Right lobe of liver (tissue), 6 donors: ENCODE measurements at regions of chr15 and their contacts with region 1.

Region 1: DNA sequence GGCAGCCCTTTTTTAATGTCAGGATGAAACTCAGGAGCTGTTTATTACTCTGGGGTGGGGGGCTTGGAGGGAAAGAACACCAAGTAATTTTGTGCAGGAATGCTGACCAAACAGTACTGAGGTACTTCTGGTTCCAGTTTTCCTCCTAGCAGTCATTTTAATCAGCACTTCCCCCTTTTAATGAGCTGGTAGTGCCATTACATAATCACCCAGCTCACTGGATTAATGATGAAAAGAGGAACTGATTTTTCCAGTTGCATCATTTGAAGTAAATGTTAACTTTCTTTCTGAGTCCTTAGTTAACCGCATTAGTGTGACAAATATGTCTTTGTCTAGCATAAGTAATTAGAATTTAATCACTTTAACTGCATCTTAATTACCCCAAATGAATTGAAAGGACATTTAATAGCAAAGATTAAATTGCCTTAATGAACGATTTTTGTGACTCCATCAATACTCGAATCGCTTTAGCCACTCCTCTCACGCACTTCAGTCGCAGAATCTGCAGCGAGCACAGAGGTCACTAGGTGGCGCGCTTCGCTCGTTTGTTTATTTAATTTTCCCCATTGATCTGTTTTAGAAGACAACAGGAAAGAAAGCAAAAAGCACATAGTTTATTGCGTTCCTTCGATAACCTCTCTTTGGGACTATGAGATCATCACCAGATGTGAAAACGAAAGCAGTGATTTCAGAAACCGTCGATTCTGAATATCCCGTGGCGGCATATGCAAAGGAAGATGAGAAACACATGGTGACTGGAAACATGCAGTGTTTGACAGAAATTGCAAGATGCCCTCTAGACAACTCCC is 9.8 kb downstream of the ONECUT1 start:
- DNase-seq: peak; percentile 61 to 69 (median 66)
- ATAC-seq: peak; percentile 11 to 37 (median 30)
- H3K4me3 ChIP-seq: peak overlapping the region in 2 of 3 donors; percentile 6 to 19
- H3K27ac ChIP-seq: peak overlapping the region in 1 of 3 donors; percentile 65
- H3K4me1 ChIP-seq: peaks cover 0 to 50% (median 11%) of the 10 kb centered on the region in 4 donors
- H3K27me3 ChIP-seq: no peaks in the 10 kb centered on the region
- CTCF ChIP-seq: peak; percentile 77 to 92 (median 90)
- POLR2A ChIP-seq: no peak

Region 2: GRCh38 chr15:52735231-52736089 is 44.9 kb before region 1 on chr15:
- intact Hi-C with region 1: no loop called
- DNase-seq: peak in 1 of 3 donors; percentile 72
- ATAC-seq: peak; percentile 81 to 88 (median 85)
- H3K4me3 ChIP-seq: no peak overlapping the region
- H3K27ac ChIP-seq: no peak overlapping the region
- H3K4me1 ChIP-seq: peaks cover 0 to 30% (median 15%) of the 10 kb centered on the region in 4 donors
- H3K27me3 ChIP-seq: no peaks in the 10 kb centered on the region
- CTCF ChIP-seq: peak; percentile 83 to 93 (median 84)
- POLR2A ChIP-seq: no peak

Region 3: DNA sequence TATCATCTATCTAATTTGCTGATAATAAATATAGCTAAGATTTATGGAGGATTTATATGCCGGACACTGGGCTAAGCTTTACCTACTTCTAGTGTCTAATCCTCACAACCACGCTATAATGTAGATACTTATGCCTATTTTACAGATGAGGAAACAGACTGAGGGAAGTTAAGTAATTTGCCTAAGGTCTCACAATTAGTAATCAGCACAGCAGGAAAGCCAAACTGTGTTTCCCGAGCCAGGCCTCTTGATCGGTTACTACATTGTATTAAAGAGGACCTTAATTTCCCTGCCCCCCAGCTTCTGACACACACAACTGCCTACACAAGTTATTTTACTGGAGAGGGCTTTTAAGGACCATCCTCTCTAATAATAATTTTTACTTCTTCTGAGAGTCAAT is 31.1 kb before region 1 on chr15:
- intact Hi-C with region 1: no loop called
- DNase-seq: no peak
- ATAC-seq: peak in 1 of 4 donors; percentile 19
- H3K4me3 ChIP-seq: no peak overlapping the region
- H3K27ac ChIP-seq: no peak overlapping the region
- H3K4me1 ChIP-seq: no peaks in the 10 kb centered on the region
- H3K27me3 ChIP-seq: no peaks in the 10 kb centered on the region
- CTCF ChIP-seq: no peak
- POLR2A ChIP-seq: no peak

Region 4: DNA sequence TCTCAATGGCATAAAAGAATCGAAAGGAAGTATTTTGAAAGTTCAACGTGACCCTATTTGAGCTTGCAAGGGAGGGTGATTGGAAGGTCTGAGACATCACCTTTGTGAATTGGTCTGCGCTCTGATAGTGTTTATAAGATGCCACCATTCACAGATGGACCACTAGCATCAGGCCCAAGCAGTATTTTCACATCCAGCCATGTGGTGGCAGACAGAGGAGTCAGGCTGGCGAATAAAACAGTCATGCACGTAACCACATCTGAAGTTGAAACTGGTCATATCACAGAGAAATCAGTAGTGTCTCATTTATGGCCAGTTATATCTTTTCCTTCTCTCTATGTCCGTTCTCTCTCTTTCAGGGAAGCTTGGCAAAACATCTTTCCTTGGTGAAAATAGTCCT is 179.9 kb after region 1 on chr15:
- intact Hi-C with region 1: loop called in 1 of 2 experiments (anchors 10 kb)
- DNase-seq: no peak
- ATAC-seq: no peak
- H3K4me3 ChIP-seq: no peak overlapping the region
- H3K27ac ChIP-seq: no peak overlapping the region
- H3K4me1 ChIP-seq: peaks cover 0 to 18% (median 7%) of the 10 kb centered on the region in 4 donors
- H3K27me3 ChIP-seq: no peaks in the 10 kb centered on the region
- CTCF ChIP-seq: no peak
- POLR2A ChIP-seq: no peak

Region 5: GRCh38 chr15:53034767-53035245 is 254.4 kb after region 1 on chr15:
- intact Hi-C with region 1: loop called in 1 of 2 experiments (anchors 5 kb)
- DNase-seq: peak; percentile 88 to 97 (median 96)
- ATAC-seq: peak; percentile 85 to 96 (median 93)
- H3K4me3 ChIP-seq: peak overlapping the region in 1 of 3 donors; percentile 19
- H3K27ac ChIP-seq: peak overlapping the region; percentile 61 to 87 (median 71)
- H3K4me1 ChIP-seq: peaks cover 0 to 54% (median 18%) of the 10 kb centered on the region in 4 donors
- H3K27me3 ChIP-seq: no peaks in the 10 kb centered on the region
- CTCF ChIP-seq: no peak
- POLR2A ChIP-seq: peak; percentile 54

Region 6: DNA sequence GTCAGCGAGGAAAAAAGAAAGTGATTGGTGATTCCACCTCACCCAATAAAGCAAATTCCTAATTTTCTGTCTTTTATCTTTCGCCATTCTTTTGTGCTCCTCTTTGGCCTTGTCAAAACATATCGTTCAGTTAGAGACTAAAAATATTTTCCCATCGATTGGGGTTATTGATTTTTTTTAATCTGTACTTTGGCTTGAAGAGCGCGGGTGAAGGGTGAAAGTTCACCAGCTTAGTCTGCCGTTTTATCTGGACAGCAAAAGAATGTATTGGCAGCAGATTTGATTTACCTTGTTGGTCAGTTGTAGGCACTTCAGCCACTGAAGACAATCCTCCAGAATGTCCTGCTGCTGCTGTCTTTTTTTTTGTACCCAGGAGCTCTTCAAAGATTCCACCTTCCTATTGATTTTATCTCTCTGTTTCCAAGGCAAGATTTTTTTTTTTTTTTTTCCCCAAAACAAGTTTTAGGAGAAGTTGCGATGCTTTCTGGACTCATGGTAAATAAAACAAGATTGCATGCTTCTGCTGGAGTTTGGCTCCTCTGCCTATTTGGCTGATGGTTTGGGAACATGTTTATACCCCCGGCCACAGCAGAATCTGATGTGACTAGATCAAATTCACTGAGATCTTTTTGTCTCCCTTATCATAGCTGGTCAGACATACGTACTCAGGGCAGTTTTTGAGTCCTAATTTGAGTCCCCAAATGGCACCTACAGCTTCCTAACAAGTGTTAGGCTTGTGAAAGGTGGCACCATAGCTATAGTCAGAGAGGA is 279.1 kb after region 1 on chr15:
- intact Hi-C with region 1: loop called in 1 of 2 experiments (anchors 10 kb)
- DNase-seq: peak in 2 of 3 donors; percentile 34 to 68
- ATAC-seq: peak; percentile 91 to 95 (median 94)
- H3K4me3 ChIP-seq: peak overlapping the region in 1 of 3 donors; percentile 31
- H3K27ac ChIP-seq: peak overlapping the region; percentile 15 to 80 (median 45)
- H3K4me1 ChIP-seq: peaks cover 0 to 26% (median 11%) of the 10 kb centered on the region in 4 donors
- H3K27me3 ChIP-seq: no peaks in the 10 kb centered on the region
- CTCF ChIP-seq: no peak
- POLR2A ChIP-seq: no peak

Region 7: DNA sequence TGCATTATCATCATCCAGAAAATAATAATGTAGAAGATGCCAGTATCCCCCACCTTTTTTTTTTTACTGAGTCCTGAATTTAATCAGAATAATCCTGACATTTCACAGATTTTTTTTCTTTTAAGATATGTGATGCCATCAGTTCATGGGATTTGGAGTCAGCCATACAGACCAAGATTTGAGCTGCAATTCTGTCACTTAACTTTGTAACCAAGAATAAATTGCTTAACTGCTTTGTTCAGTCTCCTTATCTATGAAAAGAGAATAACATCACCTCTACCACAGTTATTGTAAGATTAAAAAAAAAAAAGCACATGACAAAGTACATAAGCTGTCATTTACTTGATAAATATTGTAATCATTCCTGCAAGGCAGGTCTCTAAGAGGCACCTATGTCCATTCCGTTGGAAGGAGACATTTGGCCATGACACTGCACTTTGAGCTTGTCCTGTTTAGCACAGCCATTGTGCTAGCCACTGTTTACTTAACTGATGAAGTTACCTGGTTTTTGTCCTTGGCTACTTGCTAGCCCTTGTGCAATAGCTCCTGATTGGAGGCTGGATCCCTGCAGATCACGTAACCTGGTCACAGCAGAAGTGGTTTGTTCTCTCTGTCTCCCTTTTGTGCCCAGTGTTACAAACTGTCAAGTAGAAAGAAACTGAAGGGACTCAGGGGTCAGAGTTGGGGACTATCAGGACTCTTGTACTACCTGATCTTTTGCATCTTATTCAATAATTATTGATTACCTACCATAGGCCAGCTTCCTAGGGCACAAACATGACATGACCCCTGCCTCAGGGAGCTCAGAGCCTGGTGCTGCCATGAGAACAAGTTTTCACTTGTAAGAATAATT is 673.1 kb after region 1 on chr15:
- intact Hi-C with region 1: loop called in 1 of 2 experiments (anchors 10 kb)
- DNase-seq: peak; percentile 53 to 93 (median 74)
- ATAC-seq: peak; percentile 59 to 79 (median 70)
- H3K4me3 ChIP-seq: no peak overlapping the region
- H3K27ac ChIP-seq: peak overlapping the region; percentile 39 to 93 (median 56)
- H3K4me1 ChIP-seq: peaks cover 0 to 62% (median 27%) of the 10 kb centered on the region in 4 donors
- H3K27me3 ChIP-seq: no peaks in the 10 kb centered on the region
- CTCF ChIP-seq: no peak
- POLR2A ChIP-seq: peak; percentile 43